Naive thymus-derived CD4-positive, alpha-beta T cell (primary cell): ENCODE measurements at regions of chr17 and their contacts with region 1.

Region 1: DNA sequence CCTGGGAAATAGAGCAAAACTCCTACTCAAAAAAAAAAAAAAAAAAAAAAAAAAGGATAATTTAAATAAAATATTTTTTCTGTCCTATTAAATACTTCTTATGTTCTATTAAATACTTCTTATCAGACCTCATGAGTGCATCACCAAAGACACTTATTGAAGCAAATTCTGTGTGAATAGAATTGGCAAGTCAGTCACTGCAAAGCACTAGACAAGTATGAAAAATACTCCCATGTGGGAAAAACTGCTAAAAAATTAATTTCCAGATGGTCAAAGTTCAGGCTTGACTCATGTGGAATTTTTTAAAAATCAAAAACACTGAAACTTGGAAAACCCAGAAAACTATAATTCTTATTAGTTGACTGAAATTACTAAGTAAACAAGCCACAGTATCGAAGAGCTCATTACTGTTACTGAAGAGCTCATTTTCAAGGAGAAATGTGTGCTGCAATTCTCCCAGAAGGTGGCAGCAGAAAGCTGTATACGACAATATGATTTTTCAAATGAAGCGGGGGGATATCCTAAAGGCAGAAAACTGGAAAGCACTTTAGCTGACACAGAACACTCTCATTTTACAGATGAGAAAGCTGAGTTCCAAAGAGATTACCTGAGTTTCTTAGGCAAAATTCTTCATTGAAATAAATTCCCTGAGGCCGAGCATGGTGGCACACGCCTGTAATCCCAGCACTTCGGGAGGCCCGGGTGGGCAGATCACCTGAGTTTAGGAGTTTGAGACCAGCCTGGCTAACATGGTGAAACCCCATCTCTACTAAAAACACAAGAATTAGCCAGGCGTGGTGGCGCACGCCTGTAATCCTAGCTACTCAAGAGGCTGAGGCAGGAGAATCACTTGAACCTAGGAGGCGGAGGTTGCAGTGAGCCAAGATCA is 15.9 kb upstream of the FBXO47 start:
- DNase-seq: peak in 7 of 9 donors; percentile 40 to 76 (median 62)
- ATAC-seq: peak; percentile 70
- H3K4me3 ChIP-seq: no peak overlapping the region
- H3K4me3 Mint-ChIP-seq: no peak overlapping the region
- H3K27ac ChIP-seq: no peak overlapping the region
- H3K27ac Mint-ChIP-seq: peak overlapping the region in 1 of 9 donors; percentile 32
- H3K4me1 ChIP-seq: peaks cover 0 to 6% of the 10 kb centered on the region in 2 donors
- H3K4me1 Mint-ChIP-seq: peaks cover 0 to 6% (median 5%) of the 10 kb centered on the region in 7 donors
- H3K27me3 ChIP-seq: no peaks in the 10 kb centered on the region
- H3K27me3 Mint-ChIP-seq: peaks cover 0 to 12% (median 0%) of the 10 kb centered on the region in 5 donors

Region 2: GRCh38 chr17:38912221-38912813 is 70.8 kb before region 1 on chr17:
- CTCF ChIA-PET with region 1: no interaction called
- POLR2A ChIA-PET with region 1: no interaction called
- intact Hi-C with region 1: no loop called
- DNase-seq: no peak
- ATAC-seq: no peak
- H3K4me3 ChIP-seq: no peak overlapping the region
- H3K4me3 Mint-ChIP-seq: no peak overlapping the region
- H3K27ac ChIP-seq: peak overlapping the region; percentile 8
- H3K27ac Mint-ChIP-seq: peak overlapping the region in 7 of 9 donors; percentile 23 to 67 (median 51)
- H3K4me1 ChIP-seq: peaks cover 0 to 5% of the 10 kb centered on the region in 2 donors
- H3K4me1 Mint-ChIP-seq: peaks cover 11 to 29% (median 18%) of the 10 kb centered on the region in 7 donors
- H3K27me3 ChIP-seq: no peaks in the 10 kb centered on the region
- H3K27me3 Mint-ChIP-seq: no peaks in the 10 kb centered on the region

Region 3: GRCh38 chr17:38967290-38967738 is 15.8 kb before region 1 on chr17 and contains the start of gene FBXO47:
- CTCF ChIA-PET with region 1: interaction called, 14 read pairs
- POLR2A ChIA-PET with region 1: interaction called, 4 read pairs
- intact Hi-C with region 1: no loop called
- DNase-seq: peak; percentile 38 to 86 (median 77)
- ATAC-seq: peak; percentile 99
- H3K4me3 ChIP-seq: peak within 1 kb of the TSS; percentile 43
- H3K4me3 Mint-ChIP-seq: peak within 1 kb of the TSS; percentile 55 to 84 (median 81)
- H3K27ac ChIP-seq: peak within 1 kb of the TSS; percentile 59
- H3K27ac Mint-ChIP-seq: peak within 1 kb of the TSS; percentile 31 to 96 (median 69)
- H3K4me1 ChIP-seq: peaks cover 0 to 16% of the 10 kb centered on the region in 2 donors
- H3K4me1 Mint-ChIP-seq: peaks cover 11 to 28% (median 15%) of the 10 kb centered on the region in 7 donors
- H3K27me3 ChIP-seq: no peaks in the 10 kb centered on the region
- H3K27me3 Mint-ChIP-seq: peaks cover 0 to 2% (median 0%) of the 10 kb centered on the region in 5 donors
- total RNA-seq, gene FBXO47: not detected

Region 4: GRCh38 chr17:39057701-39058206 is 74.7 kb after region 1 on chr17:
- CTCF ChIA-PET with region 1: interaction called, 16 read pairs
- POLR2A ChIA-PET with region 1: interaction called, 3 read pairs
- intact Hi-C with region 1: loop called (anchors 1 to 5 kb)
- DNase-seq: no peak
- ATAC-seq: no peak
- H3K4me3 ChIP-seq: peak overlapping the region; percentile 65
- H3K4me3 Mint-ChIP-seq: peak overlapping the region; percentile 66 to 90 (median 84)
- H3K27ac ChIP-seq: no peak overlapping the region
- H3K27ac Mint-ChIP-seq: peak overlapping the region in 6 of 9 donors; percentile 25 to 87 (median 68)
- H3K4me1 ChIP-seq: no peaks in the 10 kb centered on the region
- H3K4me1 Mint-ChIP-seq: peaks cover 6 to 28% (median 17%) of the 10 kb centered on the region in 7 donors
- H3K27me3 ChIP-seq: no peaks in the 10 kb centered on the region
- H3K27me3 Mint-ChIP-seq: peaks cover 0 to 10% (median 0%) of the 10 kb centered on the region in 5 donors

Region 5: DNA sequence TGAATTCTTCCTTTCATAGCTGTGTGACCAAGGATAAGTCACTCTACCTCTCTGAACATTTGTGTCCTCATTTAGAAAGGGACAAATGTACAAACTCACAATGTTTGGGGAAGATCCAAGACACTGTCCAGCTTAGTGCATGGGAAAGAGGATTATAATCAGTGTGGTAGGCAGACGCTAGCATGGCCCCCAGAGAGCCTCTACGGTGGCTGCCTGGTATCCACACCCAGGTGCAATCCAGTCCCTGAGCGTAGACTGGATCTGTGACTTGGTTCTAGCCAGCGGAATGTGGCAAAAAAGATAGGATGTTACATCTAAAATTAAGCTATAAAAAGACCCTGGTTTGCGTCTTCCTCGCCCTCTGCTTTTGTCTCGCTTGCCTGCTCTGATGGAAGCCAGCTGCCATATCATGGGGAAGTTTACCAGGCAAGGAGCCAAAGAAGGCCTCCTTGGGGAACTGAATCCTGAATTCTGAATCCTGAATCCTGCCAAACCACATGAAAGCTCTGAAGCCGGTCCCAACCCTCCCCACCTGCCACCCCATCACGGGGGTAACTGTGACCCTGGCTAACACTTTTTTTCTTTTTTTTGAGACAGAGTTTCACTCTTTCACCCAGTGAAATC is 116.7 kb after region 1 on chr17:
- CTCF ChIA-PET with region 1: interaction called, 3 read pairs
- POLR2A ChIA-PET with region 1: interaction called, 12 read pairs
- intact Hi-C with region 1: no loop called
- DNase-seq: no peak
- ATAC-seq: no peak
- H3K4me3 ChIP-seq: no peak overlapping the region
- H3K4me3 Mint-ChIP-seq: peak overlapping the region in 1 of 10 donors; percentile 48
- H3K27ac ChIP-seq: no peak overlapping the region
- H3K27ac Mint-ChIP-seq: peak overlapping the region in 6 of 9 donors; percentile 8 to 95 (median 84)
- H3K4me1 ChIP-seq: peaks cover 25 to 70% of the 10 kb centered on the region in 2 donors
- H3K4me1 Mint-ChIP-seq: peaks cover 32 to 81% (median 75%) of the 10 kb centered on the region in 7 donors
- H3K27me3 ChIP-seq: no peaks in the 10 kb centered on the region
- H3K27me3 Mint-ChIP-seq: peaks cover 0 to 3% (median 0%) of the 10 kb centered on the region in 5 donors

Region 6: GRCh38 chr17:39174907-39175694 is 192.0 kb after region 1 on chr17:
- CTCF ChIA-PET with region 1: interaction called, 81 read pairs
- POLR2A ChIA-PET with region 1: interaction called, 4 read pairs
- intact Hi-C with region 1: loop called (anchors 1 kb)
- DNase-seq: peak; percentile 64 to 80 (median 74)
- ATAC-seq: peak; percentile 93
- H3K4me3 ChIP-seq: no peak overlapping the region
- H3K4me3 Mint-ChIP-seq: no peak overlapping the region
- H3K27ac ChIP-seq: no peak overlapping the region
- H3K27ac Mint-ChIP-seq: peak overlapping the region in 3 of 9 donors; percentile 24 to 78 (median 48)
- H3K4me1 ChIP-seq: peaks cover 0 to 8% of the 10 kb centered on the region in 2 donors
- H3K4me1 Mint-ChIP-seq: peaks cover 12 to 29% (median 20%) of the 10 kb centered on the region in 7 donors
- H3K27me3 ChIP-seq: no peaks in the 10 kb centered on the region
- H3K27me3 Mint-ChIP-seq: no peaks in the 10 kb centered on the region